ENCODE measurements at regions of chr20 and their contacts with region 1.

Region 1: GRCh38 chr20:37914672-37915433 is 11.9 kb downstream of the VSTM2L start:
- DNase-seq: peak; percentile 72
- ATAC-seq: peak; percentile 59
- H3K4me3 Mint-ChIP-seq: peak overlapping the region; percentile 76
- H3K27ac Mint-ChIP-seq: peak overlapping the region; percentile 87
- H3K4me1 Mint-ChIP-seq: peaks cover 67% of the 10 kb centered on the region
- H3K27me3 Mint-ChIP-seq: peaks cover 37% of the 10 kb centered on the region
- CTCF ChIP-seq: no peak

Region 2: DNA sequence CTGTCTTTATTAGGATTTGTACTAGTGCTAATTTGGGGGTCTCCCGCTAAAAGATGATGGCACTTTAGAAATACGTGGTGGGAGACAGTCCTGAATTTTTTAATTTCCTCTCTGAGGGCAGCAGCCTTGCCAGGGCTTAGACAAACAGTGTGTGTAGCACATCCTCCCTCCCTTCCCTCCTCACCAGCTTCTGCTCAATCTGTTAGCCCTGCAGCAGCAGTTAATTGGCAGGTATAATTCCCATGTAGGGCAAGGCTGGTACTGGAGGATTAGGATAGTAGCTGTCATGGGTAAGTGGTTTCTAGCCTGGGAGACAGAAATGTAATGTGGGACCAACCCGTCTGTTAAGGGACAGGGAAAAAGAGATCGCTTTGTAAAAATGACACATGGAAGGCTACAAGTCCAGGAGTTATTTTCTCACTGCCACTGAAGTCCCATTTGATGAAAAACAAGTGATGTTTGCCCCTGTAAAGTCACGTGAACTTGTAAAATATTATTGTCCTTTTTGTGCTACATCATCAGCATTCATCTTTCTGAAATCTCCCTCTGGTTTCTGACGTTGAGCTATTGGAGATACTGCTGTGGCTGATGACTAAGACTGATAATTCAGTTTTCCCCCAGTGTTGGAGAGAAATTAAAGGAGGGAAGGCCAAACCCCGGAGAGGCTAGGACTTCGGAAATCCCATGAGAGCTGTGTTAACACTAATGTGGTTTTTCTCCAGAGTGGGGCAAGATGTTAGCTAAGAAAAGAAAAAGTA is 180.4 kb before region 1 on chr20:
- CTCF ChIA-PET with region 1: no interaction called
- POLR2A ChIA-PET with region 1: no interaction called
- DNase-seq: no peak
- ATAC-seq: no peak
- H3K4me3 Mint-ChIP-seq: no peak overlapping the region
- H3K27ac Mint-ChIP-seq: no peak overlapping the region
- H3K4me1 Mint-ChIP-seq: peaks cover 14% of the 10 kb centered on the region
- H3K27me3 Mint-ChIP-seq: no peaks in the 10 kb centered on the region
- CTCF ChIP-seq: no peak

Region 3: GRCh38 chr20:37867289-37868195 is 47.3 kb before region 1 on chr20:
- CTCF ChIA-PET with region 1: no interaction called
- POLR2A ChIA-PET with region 1: no interaction called
- DNase-seq: no peak
- ATAC-seq: no peak
- H3K4me3 Mint-ChIP-seq: no peak overlapping the region
- H3K27ac Mint-ChIP-seq: no peak overlapping the region
- H3K4me1 Mint-ChIP-seq: peaks cover 24% of the 10 kb centered on the region
- H3K27me3 Mint-ChIP-seq: no peaks in the 10 kb centered on the region
- CTCF ChIP-seq: no peak

Region 4: DNA sequence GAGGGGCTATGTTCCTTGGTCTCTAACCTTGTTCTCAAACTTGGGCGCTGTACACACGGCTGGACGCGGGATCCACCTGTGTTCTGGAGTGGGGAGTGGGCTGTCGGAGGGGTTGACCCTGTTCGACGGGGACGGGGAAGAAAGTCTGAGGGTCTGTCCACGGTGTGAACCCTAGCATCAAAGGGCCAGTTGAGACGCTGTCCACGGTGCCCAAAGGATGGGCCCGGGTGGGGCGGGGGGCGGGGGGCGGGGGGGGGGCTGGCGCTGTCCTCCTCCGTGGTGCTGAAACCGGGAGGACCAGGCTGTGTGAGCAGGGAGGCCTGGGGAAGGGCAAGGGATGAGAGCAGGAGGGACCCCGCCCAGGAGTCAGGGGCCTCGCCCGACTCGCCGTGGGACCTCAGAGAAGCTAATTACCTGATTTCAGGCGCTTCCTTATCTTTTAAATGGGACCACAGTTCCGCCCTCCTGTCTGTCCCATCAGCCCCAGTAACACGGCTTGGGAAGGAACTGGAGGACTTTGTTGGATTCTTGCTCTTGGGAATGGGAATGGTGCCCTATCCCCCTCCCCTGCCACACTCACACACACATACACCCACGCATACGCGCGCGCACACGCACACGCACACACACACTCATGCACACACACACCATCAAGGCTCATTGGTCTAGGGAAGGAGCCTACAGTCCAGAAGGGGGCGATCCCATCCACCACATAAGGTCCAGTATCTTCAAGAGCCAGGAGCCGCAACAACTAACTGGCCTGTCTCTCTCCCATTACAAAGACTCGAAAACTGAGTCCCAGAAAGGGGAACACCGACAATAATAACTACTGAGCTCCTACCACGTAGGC is 13.0 kb before region 1 on chr20:
- CTCF ChIA-PET with region 1: interaction called, 12 read pairs
- POLR2A ChIA-PET with region 1: interaction called, 3 read pairs
- DNase-seq: peak; percentile 49
- ATAC-seq: peak; percentile 57
- H3K4me3 Mint-ChIP-seq: peak overlapping the region; percentile 82
- H3K27ac Mint-ChIP-seq: no peak overlapping the region
- H3K4me1 Mint-ChIP-seq: peaks cover 28% of the 10 kb centered on the region
- H3K27me3 Mint-ChIP-seq: peaks cover 26% of the 10 kb centered on the region
- CTCF ChIP-seq: peak; percentile 29; the same call in 1 of the 2 replicates

Region 5: GRCh38 chr20:37941332-37941731 is 26.5 kb after region 1 on chr20:
- CTCF ChIA-PET with region 1: interaction called, 11 read pairs
- POLR2A ChIA-PET with region 1: no interaction called
- DNase-seq: peak; percentile 50
- ATAC-seq: peak; percentile 59; the same call in 1 of the 2 replicates
- H3K4me3 Mint-ChIP-seq: no peak overlapping the region
- H3K27ac Mint-ChIP-seq: no peak overlapping the region
- H3K4me1 Mint-ChIP-seq: peaks cover 3% of the 10 kb centered on the region; the same call in 1 of the 2 replicates
- H3K27me3 Mint-ChIP-seq: no peaks in the 10 kb centered on the region
- CTCF ChIP-seq: peak; percentile 28; the same call in 1 of the 2 replicates

Region 6: GRCh38 chr20:37980876-37981275 is 66.0 kb after region 1 on chr20:
- CTCF ChIA-PET with region 1: interaction called, 17 read pairs
- POLR2A ChIA-PET with region 1: no interaction called
- DNase-seq: no peak
- ATAC-seq: peak; percentile 62
- H3K4me3 Mint-ChIP-seq: no peak overlapping the region
- H3K27ac Mint-ChIP-seq: no peak overlapping the region
- H3K4me1 Mint-ChIP-seq: peaks cover 19% of the 10 kb centered on the region
- H3K27me3 Mint-ChIP-seq: no peaks in the 10 kb centered on the region; the same call in 1 of the 2 replicates
- CTCF ChIP-seq: no peak

Region 7: DNA sequence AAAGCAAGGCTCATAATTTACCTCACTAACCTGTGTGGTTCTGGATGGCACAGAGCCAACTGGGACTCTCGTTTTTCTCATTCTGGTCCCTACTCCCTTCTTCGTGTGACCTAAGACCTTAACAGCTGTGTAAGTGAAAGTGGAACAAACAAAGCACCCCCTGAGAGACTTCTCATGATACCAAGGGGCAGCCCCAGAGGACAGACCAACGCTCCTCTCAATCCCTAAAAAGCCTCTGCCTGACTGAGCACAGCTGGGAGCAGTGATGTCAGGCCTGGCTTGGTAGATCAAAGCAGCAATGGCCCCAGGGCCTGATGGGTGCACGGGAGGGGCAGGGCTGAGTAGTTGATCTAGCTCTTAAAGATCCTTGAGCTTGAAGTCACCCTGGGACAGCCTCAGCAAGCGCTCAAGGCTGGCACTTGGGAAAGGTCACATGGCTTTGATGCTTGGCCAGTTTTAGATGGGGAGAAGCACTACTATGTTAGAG is 266.4 kb after region 1 on chr20:
- CTCF ChIA-PET with region 1: no interaction called
- POLR2A ChIA-PET with region 1: no interaction called
- DNase-seq: no peak
- ATAC-seq: no peak
- H3K4me3 Mint-ChIP-seq: no peak overlapping the region
- H3K27ac Mint-ChIP-seq: no peak overlapping the region
- H3K4me1 Mint-ChIP-seq: no peaks in the 10 kb centered on the region
- H3K27me3 Mint-ChIP-seq: no peaks in the 10 kb centered on the region; the same call in 1 of the 2 replicates
- CTCF ChIP-seq: no peak

Region 8: DNA sequence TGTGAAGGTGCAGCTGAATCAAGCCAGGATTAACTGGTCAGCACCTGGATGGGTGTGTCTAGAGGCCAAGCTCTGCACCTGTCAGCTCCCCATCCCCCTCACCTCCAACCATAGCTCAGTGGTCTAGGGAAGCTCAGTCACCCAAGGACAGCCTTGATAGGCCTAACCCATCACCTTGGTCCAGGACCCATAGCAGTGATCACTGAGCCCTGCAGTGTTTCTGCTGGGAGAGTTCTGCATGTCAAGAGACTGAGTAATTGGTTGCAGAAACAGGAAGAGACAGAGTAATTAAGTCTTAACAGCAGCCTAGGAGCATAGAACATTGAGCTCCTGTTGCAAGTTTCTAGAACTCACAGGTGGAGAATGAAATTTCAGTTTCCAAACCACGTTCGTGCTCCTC is 539.1 kb after region 1 on chr20:
- CTCF ChIA-PET with region 1: no interaction called
- POLR2A ChIA-PET with region 1: no interaction called
- DNase-seq: no peak
- ATAC-seq: no peak
- H3K4me3 Mint-ChIP-seq: no peak overlapping the region
- H3K27ac Mint-ChIP-seq: no peak overlapping the region
- H3K4me1 Mint-ChIP-seq: no peaks in the 10 kb centered on the region
- H3K27me3 Mint-ChIP-seq: peaks cover 9% of the 10 kb centered on the region
- CTCF ChIP-seq: no peak